Testis (tissue), 5 donors: ENCODE measurements at regions of chr3 and their contacts with region 1.

Region 1: DNA sequence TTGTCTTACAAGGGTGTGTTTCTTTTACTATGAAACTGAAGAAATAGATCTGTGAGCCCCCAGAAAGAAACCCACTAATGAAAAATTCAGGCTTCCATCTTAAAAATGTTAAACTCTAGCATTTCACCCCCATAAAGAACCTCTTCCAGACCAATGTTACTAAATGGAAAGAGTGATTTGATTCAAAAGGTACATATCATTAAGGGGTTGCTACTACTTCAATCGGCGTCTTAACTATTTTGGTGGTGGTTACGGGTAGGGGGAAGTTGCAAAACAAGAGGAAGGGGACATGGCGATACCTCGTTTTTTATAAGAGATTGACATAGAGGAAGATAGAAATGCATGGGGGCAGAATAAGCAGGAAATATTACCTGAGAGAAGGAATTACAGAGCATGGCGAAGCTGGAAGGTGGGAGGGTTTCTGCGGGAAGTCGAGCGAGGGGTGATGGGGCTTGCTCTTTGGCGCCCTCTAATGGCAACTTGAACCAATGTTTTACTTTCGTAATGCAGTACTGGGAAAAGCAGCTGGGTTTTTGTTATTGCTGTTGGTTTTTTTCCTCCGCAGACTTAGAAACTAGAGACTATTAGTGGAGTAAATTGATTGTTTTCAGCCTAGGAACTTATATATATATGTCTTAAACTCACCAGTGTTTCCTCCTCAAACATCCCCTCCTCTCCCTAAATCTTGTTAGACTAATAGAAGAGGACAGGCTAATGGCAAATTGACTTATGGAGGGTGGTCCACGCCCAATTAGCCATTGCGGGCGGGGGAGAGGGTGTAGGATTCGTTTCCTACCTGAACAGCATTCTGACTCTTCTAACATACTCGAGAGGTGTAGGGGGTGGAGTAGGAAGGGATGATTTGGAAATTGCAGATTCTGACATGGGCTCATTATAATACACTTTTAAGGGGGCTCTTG is 11.3 kb upstream of the SOX2 start:
- DNase-seq: peak; percentile 88
- H3K4me3 ChIP-seq: peak overlapping the region; percentile 27 to 53
- H3K27ac ChIP-seq: peak overlapping the region; percentile 41 to 68
- H3K4me1 ChIP-seq: peaks cover 12% of the 10 kb centered on the region
- H3K27me3 ChIP-seq: peaks cover 4% of the 10 kb centered on the region
- CTCF ChIP-seq: peak; percentile 76 to 95 (median 89)
- POLR2A ChIP-seq: no peak

Region 2: DNA sequence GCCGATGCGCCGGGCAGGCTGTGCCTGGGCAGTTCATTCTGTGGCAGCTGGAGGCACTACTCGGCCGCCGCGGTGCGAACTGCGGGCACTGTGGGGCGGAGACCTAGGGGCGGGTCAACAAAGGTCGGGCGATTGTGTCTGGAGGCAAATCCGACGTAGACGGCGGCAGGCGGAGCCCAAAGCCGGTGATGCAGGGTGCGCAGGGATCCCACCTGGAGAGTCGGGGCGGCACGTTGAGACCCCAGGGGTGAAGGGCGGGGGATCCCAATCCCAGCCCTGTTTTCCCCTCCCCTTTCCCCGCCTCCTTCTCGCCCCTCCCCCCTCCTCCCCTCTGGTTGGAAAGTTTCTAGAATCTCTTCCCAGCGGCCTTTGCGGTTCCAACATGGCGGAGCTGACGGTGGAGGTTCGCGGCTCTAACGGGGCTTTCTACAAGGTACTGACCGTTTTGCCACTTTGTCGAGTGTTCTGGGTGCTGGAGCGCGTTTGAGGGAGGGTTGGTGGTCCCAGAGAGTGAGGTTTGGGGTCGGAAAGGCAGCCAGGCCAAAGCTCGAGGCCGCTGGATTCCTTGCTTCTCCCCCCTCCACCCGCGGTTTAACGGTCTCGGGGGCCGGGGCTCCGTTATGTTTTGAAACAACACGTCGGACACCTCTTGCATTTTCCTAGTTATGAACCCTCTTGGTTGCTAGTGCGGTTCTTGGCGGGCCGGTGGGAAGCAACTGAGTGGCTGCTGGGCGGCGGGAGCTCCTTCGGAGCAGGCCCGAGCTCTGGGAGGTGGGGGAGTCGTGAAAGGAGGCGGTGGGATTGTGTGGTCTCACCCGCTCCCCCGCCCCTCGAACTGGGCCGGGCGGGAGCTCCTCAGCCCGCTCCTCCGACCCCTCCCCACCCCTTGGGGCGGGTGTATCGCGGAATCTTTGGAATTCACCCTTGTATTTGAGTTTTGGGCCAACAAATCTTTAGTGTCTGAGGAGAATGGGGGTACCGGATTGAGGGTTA is 787.8 kb before region 1 on chr3 and contains the start of gene FXR1:
- intact Hi-C with region 1: loop called (anchors 10 kb)
- DNase-seq: peak; percentile 94
- H3K4me3 ChIP-seq: peak within 1 kb of the TSS; percentile 90 to 97
- H3K27ac ChIP-seq: peak within 1 kb of the TSS; percentile 97 to 99
- H3K4me1 ChIP-seq: peaks cover 6% of the 10 kb centered on the region
- H3K27me3 ChIP-seq: no peaks in the 10 kb centered on the region
- CTCF ChIP-seq: peak; percentile 54 to 60 (median 59)
- POLR2A ChIP-seq: peak; percentile 63
- total RNA-seq, gene FXR1: 183 to 274 TPM